ENCODE measurements at regions of chr2 and their contacts with region 1.

Region 1: GRCh38 chr2:85728883-85729824 is 24.6 kb upstream of the ATOH8 start:
- DNase-seq: peak; percentile 76
- H3K4me3 ChIP-seq: no peak overlapping the region
- H3K27ac ChIP-seq: no peak overlapping the region
- H3K4me1 ChIP-seq: peaks cover 4% of the 10 kb centered on the region
- H3K27me3 ChIP-seq: peaks cover 0 to 3% of the 10 kb centered on the region in 2 experiments
- CTCF ChIP-seq: peak; percentile 97 to 99
- POLR2A ChIP-seq: no peak

Region 2: GRCh38 chr2:85602476-85603234 is 126.5 kb before region 1 on chr2 and contains the start of gene TMEM150A:
- CTCF ChIA-PET with region 1: no interaction called
- POLR2A ChIA-PET with region 1: no interaction called
- dilution Hi-C with region 1: no loop called
- intact Hi-C with region 1: no loop called
- DNase-seq: peak; percentile 88
- H3K4me3 ChIP-seq: peak within 1 kb of the TSS; percentile 64 to 98 (median 65)
- H3K27ac ChIP-seq: peak within 1 kb of the TSS; percentile 23
- H3K4me1 ChIP-seq: peaks cover 24% of the 10 kb centered on the region
- H3K27me3 ChIP-seq: no peaks in the 10 kb centered on the region
- CTCF ChIP-seq: peak; percentile 32 to 51
- POLR2A ChIP-seq: peak; percentile 87
- total RNA-seq, gene TMEM150A: 14.6 and 17.7 TPM in 2 replicates

Region 3: DNA sequence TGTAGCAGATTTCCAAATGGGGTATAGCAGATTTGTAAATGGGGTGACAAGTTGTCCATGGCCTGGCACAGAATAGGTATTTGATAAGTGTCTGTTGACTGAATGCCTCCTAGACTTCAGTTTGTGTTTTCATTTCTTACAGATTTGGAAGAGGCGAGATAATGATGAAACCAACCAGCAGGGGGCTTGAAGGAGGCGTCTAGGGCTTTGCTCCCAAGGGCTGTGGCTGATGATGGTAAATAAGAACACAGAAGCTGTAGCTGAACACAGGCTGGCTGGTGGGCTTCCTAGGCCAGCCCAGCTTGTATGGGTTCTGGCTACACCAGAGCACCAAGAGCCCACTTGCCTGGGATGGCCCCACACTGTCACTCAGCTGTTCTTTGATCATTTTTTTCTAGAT is 80.5 kb before region 1 on chr2:
- CTCF ChIA-PET with region 1: interaction called, 20 read pairs
- POLR2A ChIA-PET with region 1: no interaction called
- dilution Hi-C with region 1: no loop called
- intact Hi-C with region 1: loop called (anchors 5 kb)
- DNase-seq: peak; percentile 66
- H3K4me3 ChIP-seq: no peak overlapping the region
- H3K27ac ChIP-seq: peak overlapping the region; percentile 42
- H3K4me1 ChIP-seq: peaks cover 16% of the 10 kb centered on the region
- H3K27me3 ChIP-seq: no peaks in the 10 kb centered on the region
- CTCF ChIP-seq: peak; percentile 65 to 72
- POLR2A ChIP-seq: no peak

Region 4: GRCh38 chr2:85750587-85751575 is 21.7 kb after region 1 on chr2:
- CTCF ChIA-PET with region 1: interaction called, 61 read pairs
- POLR2A ChIA-PET with region 1: no interaction called
- dilution Hi-C with region 1: no loop called
- intact Hi-C with region 1: loop called (anchors 1 kb)
- DNase-seq: peak; percentile 72
- H3K4me3 ChIP-seq: no peak overlapping the region
- H3K27ac ChIP-seq: no peak overlapping the region
- H3K4me1 ChIP-seq: peaks cover 6% of the 10 kb centered on the region
- H3K27me3 ChIP-seq: no peaks in the 10 kb centered on the region
- CTCF ChIP-seq: peak; percentile 83 to 85
- POLR2A ChIP-seq: no peak

Region 5: GRCh38 chr2:85792783-85793441 is 63.8 kb after region 1 on chr2:
- CTCF ChIA-PET with region 1: interaction called, 42 read pairs
- POLR2A ChIA-PET with region 1: no interaction called
- dilution Hi-C with region 1: no loop called
- intact Hi-C with region 1: loop called (anchors 1 kb)
- DNase-seq: peak; percentile 88
- H3K4me3 ChIP-seq: no peak overlapping the region
- H3K27ac ChIP-seq: peak overlapping the region; percentile 51
- H3K4me1 ChIP-seq: peaks cover 25% of the 10 kb centered on the region
- H3K27me3 ChIP-seq: no peaks in the 10 kb centered on the region
- CTCF ChIP-seq: no peak
- POLR2A ChIP-seq: no peak

Region 6: GRCh38 chr2:85813982-85814801 is 85.0 kb after region 1 on chr2:
- CTCF ChIA-PET with region 1: interaction called, 193 read pairs
- POLR2A ChIA-PET with region 1: no interaction called
- dilution Hi-C with region 1: loop called (anchors 25 kb)
- intact Hi-C with region 1: loop called (anchors 1 kb)
- DNase-seq: peak; percentile 82
- H3K4me3 ChIP-seq: no peak overlapping the region
- H3K27ac ChIP-seq: no peak overlapping the region
- H3K4me1 ChIP-seq: no peaks in the 10 kb centered on the region
- H3K27me3 ChIP-seq: no peaks in the 10 kb centered on the region
- CTCF ChIP-seq: peak; percentile 97 to 98
- POLR2A ChIP-seq: no peak

Region 7: GRCh38 chr2:86225581-86225980 is 496.4 kb after region 1 on chr2:
- CTCF ChIA-PET with region 1: no interaction called
- POLR2A ChIA-PET with region 1: no interaction called
- dilution Hi-C with region 1: no loop called
- intact Hi-C with region 1: no loop called
- DNase-seq: peak; percentile 76
- H3K4me3 ChIP-seq: no peak overlapping the region
- H3K27ac ChIP-seq: peak overlapping the region; percentile 37
- H3K4me1 ChIP-seq: peaks cover 7% of the 10 kb centered on the region
- H3K27me3 ChIP-seq: no peaks in the 10 kb centered on the region
- CTCF ChIP-seq: peak in 1 of 2 donors; percentile 7
- POLR2A ChIP-seq: no peak

Measured in endothelial cell of umbilical vein (primary cell).